ENCODE measurements at regions of chr6 and their contacts with region 1.

Region 1: GRCh38 chr6:116253505-116254296 is at the start of gene TSPYL4:
- ATAC-seq: peak; percentile 96 to 98 (median 97)
- H3K4me3 ChIP-seq: peak within 1 kb of the TSS; percentile 88 to 95 (median 94)
- H3K27ac ChIP-seq: peak within 1 kb of the TSS; percentile 94
- H3K4me1 ChIP-seq: peaks cover 29 to 34% of the 10 kb centered on the region in 2 donors
- total RNA-seq, gene TSPYL4: 17.2 to 78.0 (median 60.3) TPM

Region 2: GRCh38 chr6:116531675-116532570 is 278.2 kb after region 1 on chr6:
- in situ Hi-C with region 1: loop called in 1 of 9 experiments (anchors 25 kb)
- ATAC-seq: peak; percentile 50 to 83 (median 66)
- H3K4me3 ChIP-seq: no peak overlapping the region
- H3K27ac ChIP-seq: no peak overlapping the region
- H3K4me1 ChIP-seq: peaks cover 2 to 3% of the 10 kb centered on the region in 2 donors

Region 3: GRCh38 chr6:116570856-116571682 is 317.4 kb after region 1 on chr6 and contains the start of gene RWDD1:
- in situ Hi-C with region 1: loop called in 1 of 9 experiments (anchors 25 kb)
- ATAC-seq: peak; percentile 93 to 98 (median 97)
- H3K4me3 ChIP-seq: peak within 1 kb of the TSS; percentile 54 to 93 (median 75)
- H3K27ac ChIP-seq: peak within 1 kb of the TSS; percentile 81 to 94
- H3K4me1 ChIP-seq: peaks cover 7 to 9% of the 10 kb centered on the region in 2 donors
- total RNA-seq, gene RWDD1: 39.5 to 53.6 (median 45.1) TPM